Gastrocnemius medialis (tissue), 4 donors: ENCODE measurements at regions of chr7 and their contacts with region 1.

Region 1: DNA sequence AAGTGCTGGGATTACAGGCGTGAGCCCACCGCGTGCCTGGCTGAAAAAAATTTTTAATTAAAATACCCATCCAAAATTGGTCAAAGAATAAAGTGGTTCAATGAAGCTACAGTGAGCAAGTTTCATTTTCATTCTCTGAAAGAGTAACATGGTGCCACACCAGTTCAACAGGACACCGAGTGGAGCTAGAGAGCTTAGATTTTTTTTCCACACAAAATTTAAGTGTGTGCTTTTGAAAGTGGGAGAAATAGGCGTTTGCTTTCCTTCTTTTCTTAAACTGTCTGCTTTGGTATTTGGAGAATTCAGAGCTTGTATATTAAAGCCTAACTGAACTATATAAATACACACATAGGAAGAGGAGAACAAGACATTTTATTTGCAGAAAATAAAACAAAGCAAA is 43.4 kb downstream of the BPGM start:
- DNase-seq: no peak
- ATAC-seq: peak; percentile 42 to 58
- H3K4me3 ChIP-seq: peak overlapping the region in 3 of 4 donors; percentile 40 to 41 (median 40)
- H3K27ac ChIP-seq: peak overlapping the region; percentile 9 to 45 (median 36)
- H3K4me1 ChIP-seq: peaks cover 0 to 7% of the 10 kb centered on the region in 2 donors
- H3K27me3 ChIP-seq: no peaks in the 10 kb centered on the region
- CTCF ChIP-seq: peak in 4 of 5 experiments; percentile 14 to 39 (median 29)
- POLR2A ChIP-seq: no peak

Region 2: DNA sequence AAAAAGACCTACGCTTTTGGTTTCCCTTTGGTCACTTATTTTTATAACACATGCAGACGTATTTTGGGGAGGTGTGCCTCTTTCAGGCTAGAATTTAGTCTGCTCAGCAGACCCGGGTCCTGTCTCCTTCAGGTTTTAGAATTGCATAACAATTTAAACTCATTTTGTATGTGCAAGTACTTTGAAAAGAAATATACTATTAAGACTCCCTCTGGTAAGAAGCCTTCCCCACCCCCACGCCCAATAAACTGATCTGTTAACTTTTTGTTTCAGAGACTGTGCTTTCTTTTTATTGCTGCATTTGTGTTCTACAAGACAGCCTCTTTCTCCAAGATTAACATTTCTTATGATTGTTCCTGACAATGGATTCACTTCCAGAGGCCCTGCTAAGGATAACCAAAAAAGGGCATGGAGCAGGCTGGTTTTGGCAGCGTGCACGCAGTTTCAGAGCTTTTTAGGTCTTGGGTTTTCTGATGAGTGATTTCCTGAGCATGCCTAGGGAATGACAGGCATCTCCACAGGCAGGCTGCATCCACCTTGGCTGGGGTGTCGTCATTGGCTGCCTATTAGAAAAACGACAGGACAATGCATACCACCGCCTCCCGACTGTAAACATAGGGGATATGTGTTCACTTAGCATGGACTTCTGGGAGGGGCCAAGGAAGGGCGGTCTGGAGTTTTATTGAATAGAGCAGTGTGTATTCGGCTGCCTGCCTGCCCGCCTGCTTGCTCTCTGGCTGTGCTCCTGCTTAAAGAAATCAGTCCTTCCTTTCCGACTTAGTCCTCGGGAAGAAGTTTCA is 89.1 kb after region 1 on chr7 and contains the start of gene CALD1:
- in situ Hi-C with region 1: no loop called
- intact Hi-C with region 1: no loop called
- DNase-seq: peak; percentile 24 to 27
- ATAC-seq: peak; percentile 73 to 76
- H3K4me3 ChIP-seq: peak within 1 kb of the TSS; percentile 40 to 60 (median 50)
- H3K27ac ChIP-seq: peak within 1 kb of the TSS; percentile 74 to 78 (median 76)
- H3K4me1 ChIP-seq: peaks cover 0 to 19% of the 10 kb centered on the region in 2 donors
- H3K27me3 ChIP-seq: no peaks in the 10 kb centered on the region
- CTCF ChIP-seq: no peak
- POLR2A ChIP-seq: peak; percentile 46 to 74
- total RNA-seq, gene CALD1: 25.9 to 43.2 (median 32.3) TPM

Region 3: GRCh38 chr7:134891262-134891695 is 201.3 kb after region 1 on chr7:
- in situ Hi-C with region 1: no loop called
- intact Hi-C with region 1: loop called (anchors 10 kb)
- DNase-seq: peak; percentile 69 to 75
- ATAC-seq: peak; percentile 93
- H3K4me3 ChIP-seq: peak overlapping the region; percentile 51 to 68 (median 54)
- H3K27ac ChIP-seq: peak overlapping the region; percentile 57 to 71 (median 66)
- H3K4me1 ChIP-seq: peaks cover 8% of the 10 kb centered on the region in 2 donors
- H3K27me3 ChIP-seq: no peaks in the 10 kb centered on the region
- CTCF ChIP-seq: no peak
- POLR2A ChIP-seq: peak; percentile 29 to 55

Region 4: DNA sequence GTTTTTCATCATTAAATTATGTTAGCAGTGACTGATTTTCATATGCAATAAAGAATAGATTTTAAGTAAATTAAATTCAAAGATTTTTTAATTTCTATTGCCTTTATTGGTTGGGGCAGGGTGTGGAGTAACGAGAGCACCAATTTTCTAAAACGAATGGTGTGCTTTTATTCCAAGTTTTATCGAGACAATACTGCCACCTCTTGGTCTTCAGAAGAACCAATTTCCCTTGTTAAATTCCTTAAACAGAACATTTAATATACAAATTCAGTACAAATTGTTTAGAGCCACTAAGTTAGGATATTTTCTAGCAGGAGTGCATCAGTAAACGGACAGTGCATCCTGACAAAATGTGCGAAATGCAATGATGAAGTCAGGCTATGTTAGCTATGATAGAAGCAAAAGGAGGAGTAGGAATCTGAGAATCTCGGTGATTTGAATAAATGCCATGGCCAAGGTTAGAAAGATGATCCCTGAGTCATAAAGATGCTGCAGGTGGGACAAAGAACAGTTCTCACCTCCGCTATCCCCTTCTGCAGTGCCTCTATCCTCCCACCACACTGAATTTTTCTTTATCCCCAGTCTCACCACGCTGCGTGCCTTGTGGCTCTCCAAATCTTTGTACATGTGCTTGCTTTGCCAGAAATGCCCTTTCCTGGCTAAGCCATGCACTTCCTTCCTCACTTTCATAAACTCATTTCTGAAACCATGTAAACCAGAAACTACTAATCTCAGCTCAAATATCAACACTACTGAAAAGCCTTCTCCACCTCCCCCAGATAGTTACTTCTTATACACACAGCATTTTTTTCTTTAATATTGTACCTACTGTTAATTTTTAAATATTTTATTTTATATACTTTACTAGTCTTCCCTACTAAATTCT is 264.4 kb after region 1 on chr7:
- in situ Hi-C with region 1: loop called in 3 of 4 experiments (anchors 10 to 25 kb)
- intact Hi-C with region 1: loop called (anchors 5 kb)
- DNase-seq: no peak
- ATAC-seq: peak in 1 of 2 donors; percentile 46
- H3K4me3 ChIP-seq: no peak overlapping the region
- H3K27ac ChIP-seq: no peak overlapping the region
- H3K4me1 ChIP-seq: no peaks in the 10 kb centered on the region
- H3K27me3 ChIP-seq: no peaks in the 10 kb centered on the region
- CTCF ChIP-seq: peak; percentile 25 to 53 (median 41)
- POLR2A ChIP-seq: no peak

Region 5: GRCh38 chr7:135170274-135170997 is 480.4 kb after region 1 on chr7 and contains the start of gene CYREN:
- in situ Hi-C with region 1: no loop called
- intact Hi-C with region 1: loop called (anchors 5 kb)
- DNase-seq: peak; percentile 90 to 95
- ATAC-seq: peak; percentile 63 to 74
- H3K4me3 ChIP-seq: peak within 1 kb of the TSS; percentile 63 to 85 (median 72)
- H3K27ac ChIP-seq: peak within 1 kb of the TSS; percentile 93 to 97 (median 96)
- H3K4me1 ChIP-seq: peaks cover 53 to 59% of the 10 kb centered on the region in 2 donors
- H3K27me3 ChIP-seq: no peaks in the 10 kb centered on the region
- CTCF ChIP-seq: peak; percentile 54 to 77 (median 66)
- POLR2A ChIP-seq: peak; percentile 81 to 89
- total RNA-seq, gene CYREN: 11.8 to 51.5 (median 20.4) TPM

Region 6: DNA sequence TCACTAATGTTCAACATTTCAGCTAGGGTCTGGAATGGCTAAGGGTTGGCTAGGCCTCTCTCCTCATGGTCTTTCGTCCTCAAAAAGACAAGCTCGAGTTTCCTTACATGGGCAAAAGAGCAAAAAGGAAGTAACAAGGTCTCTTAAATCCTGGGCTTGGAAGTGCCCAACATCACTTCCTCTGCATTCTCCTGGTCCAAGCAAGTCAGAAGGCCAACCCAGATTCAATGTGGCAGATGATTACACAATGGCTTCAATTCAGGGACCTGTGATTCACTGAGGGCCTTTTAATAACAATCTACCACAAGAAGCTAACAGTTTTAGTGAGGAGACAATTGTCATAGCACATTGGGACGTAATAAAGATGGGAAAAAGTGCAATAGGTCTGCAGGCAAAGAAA is 863.3 kb after region 1 on chr7:
- in situ Hi-C with region 1: no loop called
- intact Hi-C with region 1: no loop called
- DNase-seq: no peak
- ATAC-seq: no peak
- H3K4me3 ChIP-seq: no peak overlapping the region
- H3K27ac ChIP-seq: no peak overlapping the region
- H3K4me1 ChIP-seq: peaks cover 0 to 4% of the 10 kb centered on the region in 2 donors
- H3K27me3 ChIP-seq: no peaks in the 10 kb centered on the region
- CTCF ChIP-seq: no peak
- POLR2A ChIP-seq: no peak